ENCODE measurements at regions of chr12 and their contacts with region 1.

Region 1: GRCh38 chr12:53159195-53159839 is 21.2 kb upstream of the ZNF740 start:
- DNase-seq: peak; percentile 97
- H3K4me3 Mint-ChIP-seq: no peak overlapping the region
- H3K27ac Mint-ChIP-seq: peak overlapping the region; percentile 6
- H3K4me1 Mint-ChIP-seq: peaks cover 7% of the 10 kb centered on the region
- H3K27me3 Mint-ChIP-seq: no peaks in the 10 kb centered on the region

Region 2: GRCh38 chr12:52920937-52921826 is 238.1 kb before region 1 on chr12:
- CTCF ChIA-PET with region 1: no interaction called
- intact Hi-C with region 1: no loop called
- DNase-seq: no peak
- H3K4me3 Mint-ChIP-seq: no peak overlapping the region
- H3K27ac Mint-ChIP-seq: no peak overlapping the region
- H3K4me1 Mint-ChIP-seq: no peaks in the 10 kb centered on the region
- H3K27me3 Mint-ChIP-seq: no peaks in the 10 kb centered on the region

Region 3: DNA sequence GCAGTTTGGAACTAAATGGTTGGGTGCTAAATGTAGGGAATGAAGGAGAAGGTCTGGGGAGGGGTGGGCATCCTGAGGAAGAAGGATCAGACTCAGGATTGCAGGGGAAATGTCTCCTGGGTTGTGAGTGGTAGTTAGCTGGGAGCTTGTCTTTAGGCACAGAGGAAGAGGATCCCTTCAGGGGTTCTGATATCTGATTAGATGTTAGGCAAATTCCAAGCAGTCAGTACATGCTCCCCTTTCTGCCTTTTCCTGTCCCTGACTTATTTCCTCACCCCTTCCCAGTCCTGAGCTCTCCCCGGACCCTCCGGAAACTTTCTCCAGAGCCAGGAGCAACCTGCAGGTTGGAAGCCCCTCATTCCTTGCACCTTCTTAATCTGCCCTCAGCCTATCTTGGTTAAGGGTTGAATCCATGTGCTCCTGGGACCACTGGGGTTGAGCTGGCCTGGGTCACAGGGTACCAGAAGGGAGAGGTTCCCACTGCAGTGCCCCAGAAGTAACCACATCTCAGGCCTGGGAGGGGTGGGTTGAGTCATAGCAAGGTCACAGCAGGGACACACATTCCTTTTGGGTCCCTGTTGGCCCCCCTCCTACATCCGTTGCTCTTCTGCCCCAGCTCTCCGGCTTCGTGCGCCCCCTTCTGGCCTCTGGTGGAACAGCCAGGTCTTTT is 60.2 kb before region 1 on chr12:
- CTCF ChIA-PET with region 1: interaction called, 13 read pairs
- intact Hi-C with region 1: no loop called
- DNase-seq: peak; percentile 95
- H3K4me3 Mint-ChIP-seq: peak overlapping the region; percentile 44
- H3K27ac Mint-ChIP-seq: no peak overlapping the region
- H3K4me1 Mint-ChIP-seq: peaks cover 40% of the 10 kb centered on the region
- H3K27me3 Mint-ChIP-seq: peaks cover 6% of the 10 kb centered on the region

Region 4: GRCh38 chr12:53190108-53190729 is 30.9 kb after region 1 on chr12:
- CTCF ChIA-PET with region 1: interaction called, 31 read pairs
- intact Hi-C with region 1: loop called (anchors 1 kb)
- DNase-seq: peak; percentile 61
- H3K4me3 Mint-ChIP-seq: no peak overlapping the region
- H3K27ac Mint-ChIP-seq: peak overlapping the region; percentile 32
- H3K4me1 Mint-ChIP-seq: peaks cover 13% of the 10 kb centered on the region
- H3K27me3 Mint-ChIP-seq: no peaks in the 10 kb centered on the region

Region 5: GRCh38 chr12:53220801-53221202 is 61.5 kb after region 1 on chr12:
- CTCF ChIA-PET with region 1: interaction called, 12 read pairs
- intact Hi-C with region 1: no loop called
- DNase-seq: peak; percentile 80
- H3K4me3 Mint-ChIP-seq: peak overlapping the region; percentile 90
- H3K27ac Mint-ChIP-seq: peak overlapping the region; percentile 92
- H3K4me1 Mint-ChIP-seq: peaks cover 72% of the 10 kb centered on the region
- H3K27me3 Mint-ChIP-seq: no peaks in the 10 kb centered on the region

Region 6: DNA sequence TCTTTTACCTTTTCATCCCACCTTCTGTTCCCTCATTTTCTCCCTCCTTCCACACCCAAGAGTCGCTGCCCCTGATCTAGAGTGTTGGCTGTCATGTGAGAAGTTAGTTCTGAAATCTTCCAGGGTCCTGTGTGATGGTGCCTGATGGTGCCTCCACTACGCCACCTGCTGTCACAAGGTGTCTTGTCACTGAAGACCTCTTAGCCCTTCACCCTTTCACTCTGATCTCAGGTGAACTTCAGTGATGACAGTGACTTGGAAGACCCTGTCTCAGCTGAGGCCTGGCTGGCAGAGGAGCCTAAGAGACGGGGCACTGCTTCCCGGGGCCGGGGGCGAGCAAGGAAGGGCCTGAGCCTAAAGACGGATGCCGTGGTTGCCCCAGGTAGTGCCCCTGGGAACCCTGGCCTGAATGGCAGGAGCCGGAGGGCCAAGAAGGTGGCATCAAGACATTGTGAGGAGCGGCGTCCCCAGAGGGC is 128.5 kb after region 1 on chr12:
- CTCF ChIA-PET with region 1: interaction called, 25 read pairs
- intact Hi-C with region 1: loop called (anchors 1 kb)
- DNase-seq: peak; percentile 77
- H3K4me3 Mint-ChIP-seq: no peak overlapping the region
- H3K27ac Mint-ChIP-seq: peak overlapping the region; percentile 32
- H3K4me1 Mint-ChIP-seq: peaks cover 23% of the 10 kb centered on the region
- H3K27me3 Mint-ChIP-seq: no peaks in the 10 kb centered on the region

Region 7: DNA sequence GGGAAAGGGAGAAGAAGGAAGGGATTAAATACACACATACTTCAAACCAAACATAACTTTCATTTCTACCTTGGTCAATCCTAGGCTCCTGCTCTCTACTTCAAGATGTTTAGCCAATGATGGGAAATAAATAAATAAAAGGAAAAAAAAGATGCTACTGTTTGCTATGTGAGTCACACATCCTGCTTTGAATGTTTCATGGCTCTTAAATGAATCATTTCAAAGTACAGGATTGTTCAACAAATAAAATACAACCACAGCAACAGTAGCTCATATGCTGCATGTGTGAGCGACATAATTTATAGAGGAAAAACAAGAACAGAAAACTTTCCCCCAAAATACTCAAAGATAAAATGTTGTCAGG is 402.3 kb after region 1 on chr12:
- CTCF ChIA-PET with region 1: no interaction called
- intact Hi-C with region 1: no loop called
- DNase-seq: no peak
- H3K4me3 Mint-ChIP-seq: no peak overlapping the region
- H3K27ac Mint-ChIP-seq: peak overlapping the region; percentile 81
- H3K4me1 Mint-ChIP-seq: peaks cover 67% of the 10 kb centered on the region
- H3K27me3 Mint-ChIP-seq: no peaks in the 10 kb centered on the region

Measured in activated naive CD4-positive, alpha-beta T cell treated with anti-CD3 and anti-CD28 coated beads for 36 hours (primary cell).